Heart right ventricle (tissue), 16 donors: ENCODE measurements at regions of chr7 and their contacts with region 1.

Region 1: GRCh38 chr7:48088559-48089045 is 463 bp upstream of the UPP1 start:
- DNase-seq: peak; percentile 89 to 90
- ATAC-seq: peak; percentile 55 to 89 (median 83)
- H3K4me3 ChIP-seq: peak overlapping the region; percentile 62 to 93 (median 82)
- H3K27ac ChIP-seq: peak overlapping the region; percentile 31 to 99 (median 96)
- H3K4me1 ChIP-seq: peaks cover 2 to 86% (median 55%) of the 10 kb centered on the region in 9 donors
- H3K27me3 ChIP-seq: no peaks in the 10 kb centered on the region
- CTCF ChIP-seq: no peak

Region 2: GRCh38 chr7:47979145-47979831 is 109.3 kb before region 1 on chr7 and contains the start of gene HUS1:
- intact Hi-C with region 1: loop called in 3 of 10 experiments (anchors 5 kb)
- DNase-seq: peak; percentile 90 to 93
- ATAC-seq: peak; percentile 97 to 99 (median 99)
- H3K4me3 ChIP-seq: peak within 1 kb of the TSS; percentile 52 to 80 (median 68)
- H3K27ac ChIP-seq: peak within 1 kb of the TSS; percentile 52 to 92 (median 86)
- H3K4me1 ChIP-seq: peaks cover 5 to 21% (median 13%) of the 10 kb centered on the region in 9 donors
- H3K27me3 ChIP-seq: no peaks in the 10 kb centered on the region
- CTCF ChIP-seq: no peak
- total RNA-seq, gene HUS1: 21.5 to 35.9 (median 28.1) TPM

Region 3: GRCh38 chr7:47991741-47992311 is 96.8 kb before region 1 on chr7:
- intact Hi-C with region 1: loop called in 2 of 10 experiments (anchors 5 kb)
- DNase-seq: peak; percentile 88
- ATAC-seq: peak; percentile 99 to 100 (median 99)
- H3K4me3 ChIP-seq: peak overlapping the region; percentile 26 to 68 (median 57)
- H3K27ac ChIP-seq: peak overlapping the region in 9 of 10 donors; percentile 14 to 83 (median 51)
- H3K4me1 ChIP-seq: peaks cover 0 to 13% (median 5%) of the 10 kb centered on the region in 9 donors
- H3K27me3 ChIP-seq: no peaks in the 10 kb centered on the region
- CTCF ChIP-seq: peak; percentile 43 to 98 (median 68)

Region 4: DNA sequence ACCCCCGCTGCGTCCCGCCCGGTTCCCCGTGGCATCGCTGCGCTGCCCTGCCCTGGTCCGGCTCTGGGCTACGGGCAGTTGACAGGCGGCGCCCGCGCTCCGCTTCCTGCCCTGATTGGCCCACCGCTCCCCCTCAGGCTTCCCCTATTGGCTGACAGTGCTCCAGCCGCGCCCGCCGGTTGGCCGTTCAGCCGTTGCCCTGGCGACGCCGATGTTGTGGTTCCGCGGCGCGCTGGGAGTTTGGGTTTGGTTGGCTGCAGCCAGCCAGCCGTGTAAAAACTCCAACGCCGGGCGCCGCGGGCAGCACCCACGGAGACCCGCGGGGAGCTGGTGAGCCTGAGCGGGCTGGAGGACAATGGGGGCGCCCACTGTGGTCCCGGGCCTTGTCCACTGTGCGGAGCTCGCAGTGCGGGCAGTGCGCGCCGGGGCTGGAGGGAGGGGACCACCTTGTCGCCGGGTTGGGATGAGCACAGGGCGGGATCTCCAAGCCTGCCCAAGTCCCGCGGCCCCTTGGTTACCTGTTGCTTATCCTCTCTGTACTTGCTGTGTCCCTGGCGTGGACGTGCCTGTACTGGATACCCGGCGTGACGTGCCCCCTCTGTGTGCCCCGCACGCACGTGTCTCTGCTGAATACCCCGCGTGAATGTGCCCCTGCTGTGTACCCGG is 53.2 kb before region 1 on chr7 and contains the start of gene C7orf57:
- intact Hi-C with region 1: loop called in 5 of 10 experiments (anchors 2 to 10 kb)
- DNase-seq: peak; percentile 92 to 93
- ATAC-seq: peak; percentile 98 to 100 (median 100)
- H3K4me3 ChIP-seq: peak within 1 kb of the TSS; percentile 41 to 84 (median 62)
- H3K27ac ChIP-seq: no peak within 1 kb of the TSS
- H3K4me1 ChIP-seq: peaks cover 3 to 17% (median 13%) of the 10 kb centered on the region in 9 donors
- H3K27me3 ChIP-seq: peaks cover 0 to 68% (median 18%) of the 10 kb centered on the region in 7 donors
- CTCF ChIP-seq: peak in 6 of 9 donors; percentile 22 to 61 (median 48)
- total RNA-seq, gene C7orf57: 0.24 TPM in 1 of 10 donors, not detected in the others